Right ventricle myocardium superior (tissue), 1 donor: ENCODE measurements at regions of chrX and their contacts with region 1.

Region 1: DNA sequence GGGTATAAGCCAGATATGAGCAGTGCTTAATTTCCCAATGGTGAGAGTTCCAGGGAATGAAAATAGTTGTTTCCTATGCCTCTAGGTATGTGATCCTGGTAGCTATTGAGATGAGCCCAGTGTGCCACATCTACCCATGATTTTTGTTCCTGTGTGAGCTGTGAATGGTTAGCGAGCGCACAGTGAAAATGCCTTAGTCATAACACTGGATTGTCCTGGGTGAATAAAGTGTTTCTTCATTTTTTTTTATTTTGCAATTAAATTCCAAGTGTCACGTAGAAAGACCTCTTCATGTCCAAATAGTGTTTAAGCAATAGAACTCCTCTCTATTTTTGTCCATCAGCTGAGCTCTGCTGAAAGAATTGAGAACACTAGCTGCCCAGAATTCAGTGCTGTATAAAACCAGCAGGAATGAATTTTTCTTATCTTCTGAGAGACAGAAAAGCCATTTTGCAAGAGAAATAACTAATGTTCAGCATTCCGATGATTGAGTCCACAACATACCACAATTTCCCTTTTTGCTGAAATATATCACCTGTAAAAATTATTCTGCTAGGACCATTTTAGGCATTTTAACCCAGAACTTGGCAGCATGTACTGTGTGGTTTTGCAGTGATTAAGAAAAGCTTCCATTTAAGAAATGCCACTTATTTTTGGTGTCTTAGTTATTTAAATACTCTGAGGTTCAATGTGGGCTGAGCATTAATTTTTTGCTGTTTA is 5.6 kb downstream of the MAOA start:
- DNase-seq: no peak
- ATAC-seq: peak; percentile 64

Region 2: DNA sequence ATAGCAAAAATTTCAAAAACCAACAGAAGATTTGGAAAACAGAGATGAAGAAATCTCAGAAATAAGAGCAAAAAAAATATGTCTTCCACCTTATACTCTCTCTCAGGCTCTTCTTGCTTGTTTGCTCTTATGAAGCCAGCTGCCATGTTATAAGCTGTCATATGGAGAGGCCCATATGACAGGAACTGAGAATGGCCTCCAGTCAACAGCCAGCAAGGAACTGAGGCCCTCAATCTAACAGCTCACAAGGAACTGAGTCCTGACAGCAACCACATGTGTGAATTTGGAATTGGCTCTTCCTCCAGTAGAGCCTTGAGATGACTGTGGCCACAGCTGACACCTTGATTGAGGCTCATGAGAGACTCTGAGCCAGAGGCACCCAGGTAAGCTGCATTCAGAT is 56.9 kb before region 1 on chrX:
- intact Hi-C with region 1: no loop called
- DNase-seq: no peak
- ATAC-seq: no peak

Region 3: GRCh38 chrX:43696839-43697218 is 35.1 kb after region 1 on chrX:
- intact Hi-C with region 1: loop called (anchors 5 kb)
- DNase-seq: no peak
- ATAC-seq: no peak